Activated CD8-positive, alpha-beta T cell treated with anti-CD3 and anti-CD28 coated beads for 36 hours (primary cell): ENCODE measurements at regions of chr2 and their contacts with region 1.

Region 1: DNA sequence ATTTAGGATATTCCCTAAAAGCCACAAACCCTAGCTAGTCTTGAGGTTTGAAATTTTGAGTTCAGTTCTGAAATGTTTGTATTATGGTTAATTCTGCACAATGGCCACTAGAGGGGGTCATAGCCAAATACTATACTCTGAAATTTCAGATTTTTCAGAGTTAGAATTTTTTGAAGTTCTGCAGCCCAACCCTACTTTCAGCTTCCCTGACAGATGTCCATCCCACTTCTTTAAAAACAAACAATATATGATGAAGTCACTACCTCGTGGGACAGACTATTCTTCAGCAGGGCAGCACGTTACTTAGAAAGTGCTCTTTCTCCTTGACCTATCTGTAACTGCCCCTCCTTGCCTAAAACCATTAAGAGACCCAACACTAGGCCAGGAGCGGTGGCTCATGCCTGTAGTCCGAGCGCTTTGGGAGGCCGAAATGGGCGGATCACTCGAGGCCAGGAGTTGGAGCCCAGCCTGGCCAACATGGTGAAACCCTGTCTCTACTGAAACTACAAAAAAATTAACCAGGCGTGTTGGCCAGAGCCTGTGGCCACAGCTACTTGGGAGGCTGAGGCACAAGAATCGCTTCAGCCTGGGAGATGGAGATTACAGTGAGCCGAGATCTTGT is 48.2 kb upstream of the PAPOLG start:
- DNase-seq: no peak
- ATAC-seq: peak; percentile 55
- H3K4me3 Mint-ChIP-seq: no peak overlapping the region
- H3K27ac Mint-ChIP-seq: no peak overlapping the region
- H3K4me1 Mint-ChIP-seq: no peaks in the 10 kb centered on the region
- H3K27me3 Mint-ChIP-seq: no peaks in the 10 kb centered on the region
- CTCF ChIP-seq: peak; percentile 83

Region 2: GRCh38 chr2:60695793-60696192 is 12.1 kb before region 1 on chr2:
- CTCF ChIA-PET with region 1: interaction called, 35 read pairs
- POLR2A ChIA-PET with region 1: no interaction called
- intact Hi-C with region 1: no loop called
- DNase-seq: no peak
- ATAC-seq: no peak
- H3K4me3 Mint-ChIP-seq: no peak overlapping the region
- H3K27ac Mint-ChIP-seq: no peak overlapping the region
- H3K4me1 Mint-ChIP-seq: no peaks in the 10 kb centered on the region
- H3K27me3 Mint-ChIP-seq: no peaks in the 10 kb centered on the region
- CTCF ChIP-seq: no peak

Region 3: GRCh38 chr2:60739156-60739555 is 31.3 kb after region 1 on chr2:
- CTCF ChIA-PET with region 1: interaction called, 10 read pairs
- POLR2A ChIA-PET with region 1: no interaction called
- intact Hi-C with region 1: no loop called
- DNase-seq: no peak
- ATAC-seq: no peak
- H3K4me3 Mint-ChIP-seq: no peak overlapping the region
- H3K27ac Mint-ChIP-seq: no peak overlapping the region
- H3K4me1 Mint-ChIP-seq: peaks cover 4% of the 10 kb centered on the region
- H3K27me3 Mint-ChIP-seq: peaks cover 18% of the 10 kb centered on the region
- CTCF ChIP-seq: no peak

Region 4: GRCh38 chr2:60756191-60757041 is 48.6 kb after region 1 on chr2 and contains the start of gene PAPOLG:
- CTCF ChIA-PET with region 1: interaction called, 16 read pairs
- POLR2A ChIA-PET with region 1: no interaction called
- intact Hi-C with region 1: loop called (anchors 5 kb)
- DNase-seq: peak; percentile 100
- ATAC-seq: peak; percentile 99
- H3K4me3 Mint-ChIP-seq: peak within 1 kb of the TSS; percentile 91
- H3K27ac Mint-ChIP-seq: peak within 1 kb of the TSS; percentile 95
- H3K4me1 Mint-ChIP-seq: peaks cover 32% of the 10 kb centered on the region
- H3K27me3 Mint-ChIP-seq: no peaks in the 10 kb centered on the region
- CTCF ChIP-seq: no peak
- total RNA-seq, gene PAPOLG: 13.2 to 13.8 TPM

Region 5: GRCh38 chr2:60992985-60993392 is 285.1 kb after region 1 on chr2:
- CTCF ChIA-PET with region 1: interaction called, 98 read pairs
- POLR2A ChIA-PET with region 1: no interaction called
- intact Hi-C with region 1: loop called (anchors 2 kb)
- DNase-seq: peak; percentile 40
- ATAC-seq: peak; percentile 96
- H3K4me3 Mint-ChIP-seq: no peak overlapping the region
- H3K27ac Mint-ChIP-seq: peak overlapping the region; percentile 80
- H3K4me1 Mint-ChIP-seq: peaks cover 11% of the 10 kb centered on the region
- H3K27me3 Mint-ChIP-seq: no peaks in the 10 kb centered on the region
- CTCF ChIP-seq: no peak

Region 6: DNA sequence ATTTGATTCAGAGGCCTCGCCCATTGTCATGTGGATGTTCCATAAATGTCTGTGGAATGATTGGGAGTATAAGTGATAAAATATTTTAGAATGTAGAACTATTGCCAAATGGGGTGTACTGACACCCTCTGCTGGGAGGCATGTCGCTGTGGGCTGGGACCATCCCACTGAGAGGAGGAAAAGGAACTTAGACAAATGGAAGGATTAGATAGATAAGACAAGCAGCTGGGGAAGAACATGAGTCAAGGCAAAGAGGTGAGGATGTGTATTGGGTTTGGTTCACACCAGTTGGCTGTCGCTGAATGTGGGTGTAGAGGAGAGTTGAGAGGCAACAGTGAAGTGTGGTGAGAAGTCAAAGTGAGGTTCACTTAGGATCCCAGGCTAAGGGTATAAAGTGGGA is 458.1 kb after region 1 on chr2:
- CTCF ChIA-PET with region 1: no interaction called
- POLR2A ChIA-PET with region 1: no interaction called
- intact Hi-C with region 1: no loop called
- DNase-seq: no peak
- ATAC-seq: no peak
- H3K4me3 Mint-ChIP-seq: no peak overlapping the region
- H3K27ac Mint-ChIP-seq: no peak overlapping the region
- H3K4me1 Mint-ChIP-seq: peaks cover 2% of the 10 kb centered on the region
- H3K27me3 Mint-ChIP-seq: no peaks in the 10 kb centered on the region
- CTCF ChIP-seq: no peak